GM12878 (cell line): ENCODE measurements at regions of chr6 and their contacts with region 1.

Region 1: GRCh38 chr6:42453031-42453653 is 1.4 kb upstream of the TRERF1 start:
- DNase-seq: peak; percentile 51
- ATAC-seq: peak; percentile 88
- H3K4me3 ChIP-seq: peak overlapping the region; percentile 85
- H3K27ac ChIP-seq: peak overlapping the region; percentile 68
- H3K4me1 ChIP-seq: peaks cover 12% of the 10 kb centered on the region
- H3K27me3 ChIP-seq: no peaks in the 10 kb centered on the region
- CTCF ChIP-seq: no peak; a peak in 1 of 6 replicates
- EP300 ChIP-seq: 0 out of 4 replicates have a peak, but pooled peaks have one; percentile 2
- POLR2A ChIP-seq: peak; percentile 77
- RAD21 ChIP-seq: peak; percentile 20; the same call in 1 of the 2 replicates

Region 2: GRCh38 chr6:42251911-42252637 is 201.1 kb before region 1 on chr6:
- CTCF ChIA-PET with region 1: no interaction called
- POLR2A ChIA-PET with region 1: no interaction called
- RAD21 ChIA-PET with region 1: no interaction called
- SMC1A ChIA-PET with region 1: no interaction called
- in situ Hi-C with region 1: no loop called
- intact Hi-C with region 1: no loop called
- DNase-seq: no peak
- ATAC-seq: no peak
- H3K4me3 ChIP-seq: no peak overlapping the region
- H3K27ac ChIP-seq: no peak overlapping the region
- H3K4me1 ChIP-seq: no peaks in the 10 kb centered on the region
- H3K27me3 ChIP-seq: no peaks in the 10 kb centered on the region
- CTCF ChIP-seq: no peak
- EP300 ChIP-seq: no peak
- POLR2A ChIP-seq: no peak
- RAD21 ChIP-seq: no peak

Region 3: GRCh38 chr6:42367353-42368011 is 85.7 kb before region 1 on chr6:
- CTCF ChIA-PET with region 1: interaction called, 3 read pairs
- POLR2A ChIA-PET with region 1: interaction called, 6 read pairs
- RAD21 ChIA-PET with region 1: interaction called, 5 read pairs
- SMC1A ChIA-PET with region 1: interaction called, 14 read pairs
- in situ Hi-C with region 1: no loop called
- intact Hi-C with region 1: loop called (anchors 5 kb)
- DNase-seq: peak; percentile 59
- ATAC-seq: peak; percentile 92
- H3K4me3 ChIP-seq: peak overlapping the region; percentile 35; the same call in 1 of the 2 replicates
- H3K27ac ChIP-seq: peak overlapping the region; percentile 82
- H3K4me1 ChIP-seq: peaks cover 58% of the 10 kb centered on the region
- H3K27me3 ChIP-seq: no peaks in the 10 kb centered on the region
- CTCF ChIP-seq: no peak
- EP300 ChIP-seq: no peak
- POLR2A ChIP-seq: peak; percentile 52
- RAD21 ChIP-seq: no peak

Region 4: GRCh38 chr6:42428326-42429041 is 24.7 kb before region 1 on chr6:
- CTCF ChIA-PET with region 1: interaction called, 3 read pairs
- POLR2A ChIA-PET with region 1: interaction called, 8 read pairs
- RAD21 ChIA-PET with region 1: interaction called, 18 read pairs
- SMC1A ChIA-PET with region 1: interaction called, 16 read pairs
- in situ Hi-C with region 1: no loop called
- intact Hi-C with region 1: no loop called
- DNase-seq: no peak
- ATAC-seq: peak; percentile 88
- H3K4me3 ChIP-seq: no peak overlapping the region
- H3K27ac ChIP-seq: peak overlapping the region; percentile 71
- H3K4me1 ChIP-seq: peaks cover 55% of the 10 kb centered on the region
- H3K27me3 ChIP-seq: no peaks in the 10 kb centered on the region
- CTCF ChIP-seq: no peak
- EP300 ChIP-seq: no peak
- POLR2A ChIP-seq: no peak
- RAD21 ChIP-seq: no peak; the same call in 1 of the 2 replicates

Region 5: GRCh38 chr6:42505377-42505702 is 52.2 kb after region 1 on chr6:
- CTCF ChIA-PET with region 1: interaction called, 18 read pairs
- POLR2A ChIA-PET with region 1: interaction called, 24 read pairs
- RAD21 ChIA-PET with region 1: interaction called, 44 read pairs
- SMC1A ChIA-PET with region 1: interaction called, 29 read pairs
- in situ Hi-C with region 1: no loop called
- intact Hi-C with region 1: loop called (anchors 2 kb)
- DNase-seq: no peak
- ATAC-seq: peak; percentile 36
- H3K4me3 ChIP-seq: no peak overlapping the region
- H3K27ac ChIP-seq: peak overlapping the region; percentile 54
- H3K4me1 ChIP-seq: peaks cover 52% of the 10 kb centered on the region
- H3K27me3 ChIP-seq: no peaks in the 10 kb centered on the region
- CTCF ChIP-seq: no peak
- EP300 ChIP-seq: no peak
- POLR2A ChIP-seq: no peak
- RAD21 ChIP-seq: no peak

Region 6: GRCh38 chr6:42845327-42845694 is 392.2 kb after region 1 on chr6:
- CTCF ChIA-PET with region 1: no interaction called
- POLR2A ChIA-PET with region 1: no interaction called
- RAD21 ChIA-PET with region 1: no interaction called
- SMC1A ChIA-PET with region 1: no interaction called
- in situ Hi-C with region 1: no loop called
- intact Hi-C with region 1: no loop called
- DNase-seq: no peak
- ATAC-seq: no peak
- H3K4me3 ChIP-seq: no peak overlapping the region
- H3K27ac ChIP-seq: no peak overlapping the region
- H3K4me1 ChIP-seq: no peaks in the 10 kb centered on the region
- H3K27me3 ChIP-seq: no peaks in the 10 kb centered on the region
- CTCF ChIP-seq: no peak
- EP300 ChIP-seq: no peak
- POLR2A ChIP-seq: no peak
- RAD21 ChIP-seq: no peak